ENCODE measurements at regions of chr11 and their contacts with region 1.

Region 1: DNA sequence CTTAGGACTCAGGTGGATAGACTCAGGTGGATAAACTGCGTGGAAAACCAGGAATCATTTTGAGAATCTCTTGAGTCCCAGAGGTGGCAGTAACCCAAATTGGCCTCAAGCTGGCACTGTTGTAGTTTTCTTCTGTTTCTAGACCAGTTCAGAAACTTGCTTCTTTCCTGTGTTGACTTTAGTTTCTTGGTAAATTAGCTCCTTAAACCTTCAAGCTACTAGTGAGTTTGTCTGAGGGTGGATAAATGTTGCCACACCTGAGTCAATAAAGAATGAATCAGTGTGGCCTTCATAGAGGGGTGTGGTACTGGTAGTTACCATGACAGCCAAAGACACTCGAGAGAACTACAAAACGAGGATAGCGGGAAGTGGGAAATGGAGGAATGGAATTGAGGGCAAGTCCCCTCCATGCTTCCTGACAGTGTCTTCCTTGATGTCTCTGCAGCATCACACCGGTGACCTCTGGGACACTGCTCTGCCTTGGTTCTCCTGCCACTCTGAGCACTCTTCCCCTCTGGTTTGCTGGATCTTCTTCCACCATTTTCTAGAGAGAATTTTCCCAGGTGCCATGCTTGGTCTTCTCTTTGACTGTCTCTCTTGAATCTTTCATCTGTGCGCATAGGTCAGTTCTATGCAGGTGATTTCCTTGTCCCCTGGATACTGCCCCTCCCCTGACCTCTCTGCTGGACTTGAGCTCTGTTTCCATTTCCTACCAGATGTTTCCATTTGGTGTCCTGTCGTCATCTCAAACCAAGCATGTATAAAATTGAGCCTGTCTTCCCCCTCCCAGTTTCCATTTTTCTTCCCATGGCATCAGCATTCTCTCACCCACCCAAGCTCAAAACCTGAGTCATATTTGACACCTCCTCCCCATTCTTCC is 7.2 kb downstream of the POLD4 start:
- DNase-seq: peak; percentile 58
- ATAC-seq: peak; percentile 67
- H3K4me3 ChIP-seq: no peak overlapping the region
- H3K27ac ChIP-seq: no peak overlapping the region
- H3K4me1 ChIP-seq: peaks cover 2% of the 10 kb centered on the region
- H3K27me3 ChIP-seq: no peaks in the 10 kb centered on the region
- CTCF ChIP-seq: peak; percentile 76
- POLR2A ChIP-seq: no peak
- RAD21 ChIP-seq: peak; percentile 64

Region 2: DNA sequence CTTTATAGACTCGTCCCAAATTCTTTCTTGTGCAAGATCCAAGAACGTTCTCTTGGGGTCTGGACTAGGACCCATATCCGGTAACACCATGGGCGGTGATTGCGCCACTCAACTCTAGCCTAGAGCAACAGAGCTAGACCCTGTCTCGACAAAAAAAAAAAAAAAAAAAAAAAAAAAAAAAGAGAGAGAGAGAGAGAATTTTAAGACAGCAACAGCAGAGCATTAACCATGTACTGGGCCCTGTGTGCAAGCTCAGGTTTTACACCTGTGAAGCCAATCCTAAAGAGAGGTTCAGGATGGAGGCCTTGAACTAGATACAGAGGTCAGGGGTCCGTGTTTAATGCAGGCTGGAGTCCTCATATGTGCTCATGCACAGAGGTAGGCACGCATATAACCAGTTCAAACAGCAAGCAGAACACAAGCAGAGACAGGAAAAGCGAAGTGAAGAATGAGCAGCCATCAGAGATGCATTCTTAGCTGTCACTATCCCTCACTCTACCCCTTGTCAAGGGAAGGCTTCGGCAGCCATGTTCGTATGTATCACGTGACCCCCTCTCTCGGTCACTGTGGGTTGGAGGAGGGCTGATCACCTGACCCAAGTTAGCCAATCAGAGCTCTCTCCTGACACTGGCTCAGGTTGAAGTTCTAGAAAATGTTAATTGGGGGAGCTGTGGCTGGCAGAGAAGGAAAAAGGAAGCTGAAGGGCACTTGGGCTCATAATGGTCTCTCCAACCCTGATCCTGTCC is 339.8 kb before region 1 on chr11:
- CTCF ChIA-PET with region 1: no interaction called
- POLR2A ChIA-PET with region 1: interaction called, 20 read pairs
- dilution Hi-C with region 1: no loop called
- in situ Hi-C with region 1: no loop called
- intact Hi-C with region 1: no loop called
- DNase-seq: no peak
- ATAC-seq: no peak
- H3K4me3 ChIP-seq: no peak overlapping the region
- H3K27ac ChIP-seq: no peak overlapping the region
- H3K4me1 ChIP-seq: no peaks in the 10 kb centered on the region
- H3K27me3 ChIP-seq: no peaks in the 10 kb centered on the region; the same call in 1 of the 2 replicates
- CTCF ChIP-seq: no peak
- POLR2A ChIP-seq: no peak
- RAD21 ChIP-seq: no peak

Region 3: GRCh38 chr11:67373925-67374618 is 27.9 kb after region 1 on chr11:
- CTCF ChIA-PET with region 1: interaction called, 128 read pairs
- POLR2A ChIA-PET with region 1: interaction called, 11 read pairs
- dilution Hi-C with region 1: no loop called
- in situ Hi-C with region 1: no loop called
- intact Hi-C with region 1: no loop called
- DNase-seq: peak; percentile 96
- ATAC-seq: peak; percentile 31
- H3K4me3 ChIP-seq: peak overlapping the region; percentile 78
- H3K27ac ChIP-seq: peak overlapping the region; percentile 94
- H3K4me1 ChIP-seq: peaks cover 43% of the 10 kb centered on the region
- H3K27me3 ChIP-seq: no peaks in the 10 kb centered on the region
- CTCF ChIP-seq: peak; percentile 44
- POLR2A ChIP-seq: peak; percentile 70
- RAD21 ChIP-seq: peak; percentile 30; the same call in 1 of the 2 replicates

Region 4: DNA sequence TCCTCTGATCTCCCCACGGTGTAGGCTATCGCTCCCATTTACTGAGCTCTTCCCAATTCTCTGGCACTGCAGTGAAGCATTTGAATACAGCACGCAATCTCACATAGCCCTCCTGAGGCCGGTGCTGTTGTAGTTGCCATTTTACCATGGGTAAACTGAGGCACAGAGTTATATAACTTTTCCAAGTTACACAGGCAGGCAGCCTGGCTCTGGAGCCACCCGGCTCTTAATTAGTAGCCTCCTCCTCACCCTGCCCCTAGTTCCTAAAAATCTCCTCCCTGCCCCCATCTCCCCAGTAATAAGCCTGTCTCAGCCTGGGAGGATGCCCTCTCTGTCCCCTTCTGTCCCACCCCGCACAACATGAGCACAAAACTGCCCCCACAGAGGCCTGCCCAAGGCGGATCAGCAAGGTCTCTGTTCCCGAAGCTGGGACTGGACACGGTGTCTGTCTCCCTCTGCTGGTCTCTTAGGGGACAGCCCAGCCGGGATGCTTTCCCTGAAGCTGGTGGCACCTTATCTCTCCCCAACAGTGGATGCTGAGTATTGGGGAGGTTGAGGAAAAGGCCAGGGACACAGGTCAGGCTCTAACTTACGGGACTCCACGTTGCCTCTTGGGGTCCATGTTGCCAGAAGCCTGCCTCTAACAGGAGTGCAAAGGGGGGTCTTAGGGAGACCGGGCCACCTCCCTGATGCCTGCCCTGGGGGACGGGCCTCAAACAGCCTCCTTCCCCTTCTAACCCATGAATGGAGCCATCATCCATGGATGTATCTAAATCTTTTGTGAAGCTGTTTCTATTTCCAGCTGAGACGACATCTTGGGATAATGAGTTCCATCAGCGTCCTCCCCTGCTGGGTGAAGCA is 36.3 kb after region 1 on chr11:
- CTCF ChIA-PET with region 1: interaction called, 128 read pairs
- POLR2A ChIA-PET with region 1: interaction called, 4 read pairs
- dilution Hi-C with region 1: no loop called
- in situ Hi-C with region 1: no loop called
- intact Hi-C with region 1: loop called (anchors 1 kb)
- DNase-seq: peak; percentile 69
- ATAC-seq: peak; percentile 88
- H3K4me3 ChIP-seq: no peak overlapping the region
- H3K27ac ChIP-seq: no peak overlapping the region
- H3K4me1 ChIP-seq: peaks cover 20% of the 10 kb centered on the region
- H3K27me3 ChIP-seq: no peaks in the 10 kb centered on the region; the same call in 1 of the 2 replicates
- CTCF ChIP-seq: peak; percentile 97
- POLR2A ChIP-seq: 0 out of 2 replicates have a peak, but pooled peaks have one; percentile 48
- RAD21 ChIP-seq: peak; percentile 99

Region 5: GRCh38 chr11:67507864-67508485 is 161.8 kb after region 1 on chr11 and contains the start of gene CDK2AP2:
- CTCF ChIA-PET with region 1: no interaction called
- POLR2A ChIA-PET with region 1: no interaction called
- dilution Hi-C with region 1: no loop called
- in situ Hi-C with region 1: no loop called
- intact Hi-C with region 1: loop called (anchors 2 kb)
- DNase-seq: peak; percentile 100
- ATAC-seq: peak; percentile 82
- H3K4me3 ChIP-seq: peak within 1 kb of the TSS; percentile 88
- H3K27ac ChIP-seq: peak within 1 kb of the TSS; percentile 69
- H3K4me1 ChIP-seq: peaks cover 14% of the 10 kb centered on the region
- H3K27me3 ChIP-seq: 0 out of 2 replicates have a peak, but pooled peaks cover 2% of the 10 kb centered on the region
- CTCF ChIP-seq: no peak
- POLR2A ChIP-seq: peak; percentile 28; the same call in 1 of the 2 replicates
- RAD21 ChIP-seq: no peak
- total RNA-seq, gene CDK2AP2: 8.1 and 9.2 TPM in 2 replicates

Measured in IMR-90 (cell line).